PC-9 (cell line): ENCODE measurements at regions of chr19 and their contacts with region 1.

Region 1: GRCh38 chr19:11987405-11988281 is 22.8 kb downstream of the ZNF763 start:
- DNase-seq: peak; percentile 82 to 92
- H3K4me3 ChIP-seq: peak overlapping the region; percentile 48
- H3K27ac ChIP-seq: no peak overlapping the region
- H3K4me1 ChIP-seq: peaks cover 7% of the 10 kb centered on the region; the same call in 1 of the 2 replicates
- H3K27me3 ChIP-seq: peaks cover 16% of the 10 kb centered on the region; the same call in 1 of the 2 replicates
- CTCF ChIP-seq: no peak

Region 2: DNA sequence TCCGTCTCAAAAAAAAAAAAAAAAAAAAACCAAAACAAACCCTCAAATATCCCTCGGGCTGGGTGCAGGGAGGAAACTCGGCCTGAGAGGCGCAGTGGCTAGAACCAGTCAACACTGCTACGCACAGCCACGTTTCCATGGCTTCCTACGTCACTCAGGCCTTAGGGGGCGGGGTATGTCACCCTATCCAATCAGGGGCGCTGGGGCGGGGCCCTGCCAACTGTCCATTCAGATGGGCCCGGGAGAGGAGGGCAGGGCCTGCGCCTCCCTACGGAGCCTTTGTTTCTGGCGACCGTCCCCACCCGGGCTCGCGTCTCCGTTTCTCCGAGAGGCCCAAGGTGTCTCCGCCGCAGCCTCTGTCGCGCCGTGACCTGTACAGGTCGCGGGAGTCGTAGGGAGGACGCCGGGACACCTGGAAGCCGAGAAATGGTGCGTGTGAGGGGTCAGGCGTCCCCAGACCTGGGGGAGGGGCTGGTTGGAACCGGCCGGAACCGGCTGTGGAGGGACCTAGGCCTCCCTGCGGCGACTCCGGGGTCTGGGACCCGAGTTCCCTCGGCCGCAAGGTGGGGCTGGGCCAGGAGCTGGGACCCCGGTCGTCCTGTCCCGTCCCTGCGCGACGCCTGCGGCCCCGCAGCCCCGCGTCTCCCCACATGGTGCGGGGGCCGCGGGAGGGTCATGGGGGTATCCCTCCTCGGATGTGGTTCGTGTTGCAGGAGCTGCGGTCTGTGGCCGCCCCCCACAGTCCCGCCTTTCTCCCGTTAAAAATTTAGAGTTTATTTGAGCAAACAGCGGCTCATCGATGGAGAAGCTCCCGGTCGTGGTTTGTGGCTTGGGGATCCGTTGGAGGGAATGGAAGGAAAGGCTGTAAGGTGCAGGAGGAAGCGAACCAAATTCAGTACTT is 390.2 kb before region 1 on chr19 and contains the start of gene ZNF627:
- CTCF ChIA-PET with region 1: no interaction called
- POLR2A ChIA-PET with region 1: interaction called, 12 read pairs
- intact Hi-C with region 1: no loop called
- DNase-seq: peak; percentile 98
- H3K4me3 ChIP-seq: peak within 1 kb of the TSS; percentile 97
- H3K27ac ChIP-seq: peak within 1 kb of the TSS; percentile 65
- H3K4me1 ChIP-seq: peaks cover 14% of the 10 kb centered on the region
- H3K27me3 ChIP-seq: no peaks in the 10 kb centered on the region
- CTCF ChIP-seq: 0 out of 2 replicates have a peak, but pooled peaks have one; percentile 22
- total RNA-seq, gene ZNF627: 11.4 and 12.6 TPM in 2 replicates

Region 3: DNA sequence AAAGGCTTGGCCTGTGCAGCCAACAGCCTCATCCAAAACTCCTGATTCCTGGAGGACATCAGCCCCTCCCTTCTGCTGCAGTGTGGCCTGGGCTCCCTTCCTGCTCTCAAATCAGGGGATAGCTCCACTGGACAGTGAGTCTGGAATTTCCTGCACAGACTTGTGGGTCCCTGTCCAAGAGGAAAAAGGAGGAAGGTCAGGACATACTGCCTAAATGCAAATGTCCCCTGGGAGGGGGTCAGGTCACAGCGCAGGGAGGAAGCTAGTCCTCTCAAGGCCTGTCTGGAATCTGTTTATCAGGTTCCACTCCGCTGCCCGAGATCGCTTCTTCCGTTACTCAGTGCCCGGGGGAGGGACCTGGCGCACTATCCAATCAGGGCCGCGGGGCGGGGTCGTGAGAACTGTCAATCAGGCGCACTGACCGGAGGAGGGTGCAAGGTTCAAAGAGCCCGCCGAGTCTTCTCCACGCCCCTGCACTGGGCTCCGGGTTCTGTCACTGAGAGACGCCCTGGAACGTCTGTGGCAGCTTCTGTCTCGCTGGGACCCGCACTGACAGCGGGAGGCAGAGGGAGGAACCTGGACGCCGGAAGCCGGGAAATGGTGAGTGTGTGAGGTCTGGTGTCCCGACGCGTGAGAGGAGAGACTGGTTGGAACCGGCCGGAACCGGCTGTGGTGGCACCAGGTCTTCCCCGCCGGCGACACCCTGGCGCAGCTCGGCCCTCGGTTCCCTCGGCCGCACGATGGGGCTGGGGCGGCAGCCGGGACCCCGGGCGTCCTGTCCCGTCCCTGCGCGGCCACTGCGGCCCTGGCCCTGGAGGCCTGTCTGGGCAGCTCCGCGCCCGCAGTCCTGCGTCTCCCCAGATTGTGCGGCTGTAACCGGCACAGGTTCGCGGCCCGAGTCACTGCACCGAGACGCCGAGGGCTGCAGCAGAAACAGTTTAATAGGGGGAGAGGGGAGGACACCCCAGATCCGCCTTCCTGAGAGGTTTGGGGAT is 220.7 kb before region 1 on chr19 and contains the start of gene ZNF441:
- CTCF ChIA-PET with region 1: no interaction called
- POLR2A ChIA-PET with region 1: no interaction called
- intact Hi-C with region 1: no loop called
- DNase-seq: peak; percentile 87 to 96
- H3K4me3 ChIP-seq: peak within 1 kb of the TSS; percentile 74
- H3K27ac ChIP-seq: no peak within 1 kb of the TSS
- H3K4me1 ChIP-seq: peaks cover 9% of the 10 kb centered on the region; the same call in 1 of the 2 replicates
- H3K27me3 ChIP-seq: no peaks in the 10 kb centered on the region
- CTCF ChIP-seq: no peak
- total RNA-seq, gene ZNF441: 1.6 and 1.7 TPM in 2 replicates

Region 4: DNA sequence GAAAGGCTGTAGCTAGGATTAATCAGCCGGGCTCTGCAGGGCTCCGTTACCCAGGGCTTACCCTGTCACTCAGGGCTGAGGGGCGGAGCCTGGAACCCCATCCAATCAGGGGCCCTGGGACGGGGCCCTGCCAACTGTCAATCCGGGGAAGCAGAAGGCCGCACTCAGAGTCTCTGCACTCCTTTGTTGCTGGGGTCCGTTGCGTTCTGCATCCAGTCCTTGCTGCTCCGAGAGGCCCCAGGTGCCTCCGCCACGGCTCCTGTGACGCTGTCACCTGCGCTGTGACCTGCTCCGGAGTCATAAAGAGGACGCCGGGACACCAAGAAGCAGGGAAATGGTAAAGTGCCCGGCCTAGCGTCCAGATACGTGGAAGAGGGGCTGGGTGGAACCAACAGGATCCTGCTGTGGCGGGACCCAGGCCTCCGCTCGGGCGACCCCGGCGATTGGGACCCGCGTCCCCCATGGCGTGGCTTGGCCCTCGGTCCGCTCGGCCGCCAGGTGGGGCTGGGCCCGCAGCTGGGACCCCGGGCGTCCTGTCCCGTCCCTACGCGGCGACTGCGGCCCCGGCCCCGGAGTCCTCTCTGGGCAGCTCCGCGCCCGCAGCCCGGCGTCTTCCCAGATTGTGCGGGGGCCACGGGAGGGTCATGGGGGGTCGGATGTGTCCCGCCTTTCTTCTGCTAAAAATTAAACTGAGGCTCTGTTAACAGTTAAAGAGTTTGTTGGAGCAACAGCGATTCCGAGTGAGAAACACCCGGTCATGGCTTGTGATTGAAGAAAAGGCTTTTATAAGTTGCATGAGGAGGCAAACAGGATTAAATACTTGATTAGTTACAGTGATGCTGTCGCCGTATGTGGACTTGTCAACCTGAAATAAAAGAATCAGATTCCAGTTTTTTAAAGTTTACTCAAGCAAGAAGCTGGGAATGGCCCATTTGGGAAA is 189.0 kb before region 1 on chr19 and contains the start of gene ZNF491:
- CTCF ChIA-PET with region 1: interaction called, 4 read pairs
- POLR2A ChIA-PET with region 1: no interaction called
- intact Hi-C with region 1: loop called (anchors 1 kb)
- DNase-seq: peak in 1 of 2 experiments; percentile 69
- H3K4me3 ChIP-seq: peak within 1 kb of the TSS; percentile 19; the same call in 1 of the 2 replicates
- H3K27ac ChIP-seq: no peak within 1 kb of the TSS
- H3K4me1 ChIP-seq: no peaks in the 10 kb centered on the region
- H3K27me3 ChIP-seq: no peaks in the 10 kb centered on the region
- CTCF ChIP-seq: no peak
- total RNA-seq, gene ZNF491: not detected in 2 replicates

Region 5: GRCh38 chr19:11881151-11881800 is 106.4 kb before region 1 on chr19:
- CTCF ChIA-PET with region 1: interaction called, 3 read pairs
- POLR2A ChIA-PET with region 1: interaction called, 4 read pairs
- intact Hi-C with region 1: loop called (anchors 1 kb)
- DNase-seq: peak in 1 of 2 experiments; percentile 54
- H3K4me3 ChIP-seq: no peak overlapping the region
- H3K27ac ChIP-seq: no peak overlapping the region
- H3K4me1 ChIP-seq: no peaks in the 10 kb centered on the region
- H3K27me3 ChIP-seq: peaks cover 21% of the 10 kb centered on the region; the same call in 1 of the 2 replicates
- CTCF ChIP-seq: peak; percentile 80

Region 6: DNA sequence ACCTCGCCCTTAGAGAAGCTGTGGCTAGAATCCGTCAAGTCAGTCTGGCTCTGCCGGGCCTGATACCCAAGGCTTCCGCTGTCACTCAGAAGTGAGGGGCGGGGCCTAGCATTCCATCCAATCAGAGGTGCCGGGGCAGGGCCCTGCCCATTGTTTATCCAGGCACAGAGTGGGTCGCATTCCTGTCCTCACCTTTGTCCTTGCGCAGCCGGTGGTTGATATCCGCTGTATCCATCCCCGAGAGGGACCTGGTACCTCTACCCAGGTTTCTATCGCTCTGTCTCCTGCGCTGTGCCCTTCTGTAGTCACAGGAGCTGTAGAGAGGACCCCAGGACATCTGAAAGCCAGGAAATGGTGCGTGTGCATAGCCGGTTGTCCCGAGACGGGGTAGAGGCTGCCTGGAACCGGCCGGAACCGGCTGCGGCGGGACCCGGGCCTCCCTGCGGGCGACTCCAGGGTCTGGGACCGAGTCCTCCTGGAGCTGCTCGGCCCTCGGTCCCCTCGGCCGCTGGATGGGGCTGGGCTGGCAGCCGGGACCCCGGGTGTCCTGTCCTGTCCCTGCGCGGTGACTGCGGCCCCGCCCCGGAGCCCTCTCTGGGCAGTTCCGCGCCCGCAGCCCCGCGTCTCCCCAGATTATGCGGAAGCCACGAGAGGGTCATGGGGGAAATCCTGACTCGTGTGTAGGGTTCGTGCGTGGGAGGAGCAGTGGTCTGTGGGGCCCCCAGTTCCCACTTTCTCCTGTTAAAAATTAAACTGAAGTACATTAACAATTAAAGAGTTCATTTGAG is 22.6 kb before region 1 on chr19 and contains the start of gene ZNF763:
- CTCF ChIA-PET with region 1: interaction called, 3 read pairs
- POLR2A ChIA-PET with region 1: no interaction called
- intact Hi-C with region 1: loop called (anchors 2 kb)
- DNase-seq: peak in 1 of 2 experiments; percentile 79
- H3K4me3 ChIP-seq: no peak within 1 kb of the TSS
- H3K27ac ChIP-seq: no peak within 1 kb of the TSS
- H3K4me1 ChIP-seq: no peaks in the 10 kb centered on the region
- H3K27me3 ChIP-seq: peaks cover 7% of the 10 kb centered on the region; the same call in 1 of the 2 replicates
- CTCF ChIP-seq: no peak
- total RNA-seq, gene ZNF763: 0.55 and 0.83 TPM in 2 replicates

Region 7: GRCh38 chr19:12000152-12000981 is 12.7 kb after region 1 on chr19:
- CTCF ChIA-PET with region 1: no interaction called
- POLR2A ChIA-PET with region 1: no interaction called
- intact Hi-C with region 1: no loop called
- DNase-seq: no peak
- H3K4me3 ChIP-seq: no peak overlapping the region
- H3K27ac ChIP-seq: no peak overlapping the region
- H3K4me1 ChIP-seq: no peaks in the 10 kb centered on the region
- H3K27me3 ChIP-seq: no peaks in the 10 kb centered on the region
- CTCF ChIP-seq: no peak